ENCODE measurements at regions of chr11 and their contacts with region 1.

Region 1: DNA sequence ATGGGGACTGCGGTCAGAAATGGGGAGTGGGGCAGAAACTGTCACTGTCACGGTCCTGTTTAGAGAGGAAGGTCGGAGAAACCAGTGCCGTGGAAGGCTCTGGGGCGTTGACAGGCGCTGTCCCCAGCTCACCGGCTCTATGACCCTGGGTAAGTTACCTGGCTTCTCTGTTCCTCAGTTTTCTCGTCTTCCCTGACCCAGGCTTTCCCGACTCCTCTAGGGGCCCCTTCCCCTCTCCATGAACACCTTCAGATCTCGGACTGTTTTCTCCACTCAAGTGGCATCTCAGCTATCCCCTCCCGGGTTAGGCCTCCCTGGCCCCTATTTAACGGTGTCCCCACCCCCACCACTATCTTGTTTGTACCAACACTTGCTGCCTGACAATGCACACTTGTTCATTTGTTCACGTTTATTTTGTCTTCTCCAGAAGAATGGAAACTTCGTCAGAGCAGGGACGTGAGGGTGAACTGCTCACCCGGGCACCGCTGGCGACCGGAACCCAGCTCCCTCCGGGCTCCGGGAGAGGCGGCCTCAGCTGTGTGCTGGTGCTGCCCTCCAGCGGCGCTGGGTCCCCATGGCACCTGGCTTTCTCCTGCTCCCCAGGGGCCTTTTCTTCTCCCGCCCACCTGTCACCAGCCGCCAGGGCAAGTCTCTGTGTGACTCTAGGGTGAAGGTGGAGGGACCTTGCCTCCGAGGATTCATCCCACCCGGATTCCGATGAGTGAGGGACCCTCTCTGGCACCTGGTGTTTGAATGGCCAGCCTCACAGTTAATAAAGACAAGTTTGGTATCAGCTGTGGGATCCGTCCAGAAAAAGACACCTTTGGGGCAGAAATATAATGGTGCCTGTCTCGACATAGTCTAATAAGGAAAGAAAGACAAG is 33.1 kb upstream of the SLC35C1 start:
- DNase-seq: peak; percentile 62
- H3K4me3 ChIP-seq: peak overlapping the region; percentile 27 to 45 (median 42)
- H3K27ac ChIP-seq: no peak overlapping the region
- H3K4me1 ChIP-seq: peaks cover 8% of the 10 kb centered on the region
- H3K27me3 ChIP-seq: no peaks in the 10 kb centered on the region
- CTCF ChIP-seq: peak; percentile 79 to 98

Region 2: DNA sequence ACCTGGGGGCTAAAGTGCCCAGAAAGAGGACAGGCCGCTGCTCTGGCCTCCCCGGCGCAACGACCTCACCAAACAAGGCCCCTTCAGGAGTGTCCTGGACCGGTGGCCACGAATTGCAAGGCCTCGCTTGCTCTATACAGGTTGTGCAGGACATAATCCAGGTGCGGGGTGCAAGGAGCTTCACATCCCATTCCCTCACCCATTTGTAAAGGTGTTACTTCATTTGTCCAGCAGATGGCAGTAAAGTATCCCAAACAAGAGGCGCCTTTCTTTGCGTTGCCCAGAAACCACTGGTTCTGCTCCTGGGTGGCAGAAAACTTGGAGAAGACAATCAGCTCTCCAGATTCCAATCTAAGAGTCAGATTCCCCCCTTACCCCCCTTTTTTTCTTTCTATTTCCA is 661.2 kb before region 1 on chr11:
- CTCF ChIA-PET with region 1: no interaction called
- dilution Hi-C with region 1: no loop called
- in situ Hi-C with region 1: no loop called
- intact Hi-C with region 1: loop called (anchors 2 kb)
- DNase-seq: peak; percentile 49
- H3K4me3 ChIP-seq: no peak overlapping the region
- H3K27ac ChIP-seq: no peak overlapping the region
- H3K4me1 ChIP-seq: peaks cover 6% of the 10 kb centered on the region
- H3K27me3 ChIP-seq: no peaks in the 10 kb centered on the region
- CTCF ChIP-seq: peak; percentile 44 to 73

Region 3: DNA sequence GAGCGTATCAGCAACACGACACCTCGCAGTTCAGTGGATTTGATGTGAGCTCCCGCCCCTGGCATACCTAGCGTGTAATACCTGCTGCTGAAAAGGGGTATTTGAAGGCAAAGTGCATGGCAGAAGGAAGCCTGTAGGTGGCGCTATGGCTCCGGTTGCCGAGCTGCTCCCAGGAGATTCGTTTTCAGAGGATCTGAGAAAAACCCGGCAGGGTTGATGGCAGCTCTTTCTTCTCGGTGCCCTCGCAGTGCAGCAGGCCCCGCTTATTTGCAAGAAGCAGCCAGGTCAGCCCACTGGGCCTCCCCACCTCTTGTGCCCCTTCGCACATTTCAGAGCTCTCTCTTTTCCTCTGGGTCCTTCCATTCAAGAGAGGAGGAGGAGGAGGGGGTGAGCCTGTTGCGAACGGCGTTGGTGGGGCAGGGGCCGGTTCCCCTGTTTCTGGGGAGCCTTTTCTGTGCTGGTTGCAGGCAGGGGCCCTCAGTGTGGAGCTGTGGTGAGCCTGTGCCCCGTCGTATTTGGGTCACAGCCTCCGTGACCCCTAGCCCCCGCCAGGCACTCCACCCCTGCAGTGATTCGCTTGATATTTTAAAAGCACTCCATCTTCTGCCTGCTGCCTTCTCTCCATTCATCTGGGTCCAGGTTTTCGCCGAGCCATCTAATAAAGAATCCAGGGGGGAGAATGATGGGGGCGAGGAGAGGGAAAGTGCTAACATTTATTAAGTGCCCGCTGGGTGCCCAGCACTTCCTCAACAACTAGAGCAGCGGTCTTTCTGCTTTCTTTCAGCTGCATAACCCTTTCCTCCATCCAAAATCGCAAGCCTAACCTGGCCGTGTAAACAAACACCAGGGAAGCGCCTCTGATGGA is 400.3 kb before region 1 on chr11:
- CTCF ChIA-PET with region 1: interaction called, 28 read pairs
- dilution Hi-C with region 1: no loop called
- in situ Hi-C with region 1: loop called (anchors 5 to 10 kb)
- intact Hi-C with region 1: loop called (anchors 1 kb)
- DNase-seq: peak; percentile 38
- H3K4me3 ChIP-seq: no peak overlapping the region
- H3K27ac ChIP-seq: no peak overlapping the region
- H3K4me1 ChIP-seq: no peaks in the 10 kb centered on the region
- H3K27me3 ChIP-seq: peaks cover under 1% of the 10 kb centered on the region
- CTCF ChIP-seq: peak; percentile 94 to 99

Region 4: DNA sequence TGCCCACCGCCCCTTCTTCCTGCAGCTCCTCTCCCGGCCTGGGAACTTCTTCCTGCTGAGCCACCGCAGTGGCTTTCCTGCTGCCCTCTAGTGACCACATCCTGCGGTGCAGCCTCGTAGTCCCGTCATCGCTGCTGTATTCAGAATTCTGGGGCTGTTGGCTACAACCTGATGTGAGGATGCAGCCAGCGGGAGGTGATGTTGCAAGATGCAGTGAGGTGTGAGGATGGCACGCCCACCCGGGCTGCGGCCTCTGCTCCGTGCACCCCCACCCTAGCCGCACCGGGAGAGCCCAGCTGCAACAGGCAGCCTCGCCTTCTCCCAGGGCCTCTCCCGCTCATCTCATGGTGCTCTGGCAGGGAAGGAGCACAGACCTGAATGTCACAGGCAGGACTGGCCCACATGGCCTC is 116.5 kb before region 1 on chr11:
- CTCF ChIA-PET with region 1: interaction called, 5 read pairs
- dilution Hi-C with region 1: no loop called
- in situ Hi-C with region 1: no loop called
- intact Hi-C with region 1: loop called (anchors 2 kb)
- DNase-seq: peak; percentile 36
- H3K4me3 ChIP-seq: no peak overlapping the region
- H3K27ac ChIP-seq: no peak overlapping the region
- H3K4me1 ChIP-seq: peaks cover 7% of the 10 kb centered on the region
- H3K27me3 ChIP-seq: no peaks in the 10 kb centered on the region
- CTCF ChIP-seq: peak; percentile 92 to 93

Region 5: DNA sequence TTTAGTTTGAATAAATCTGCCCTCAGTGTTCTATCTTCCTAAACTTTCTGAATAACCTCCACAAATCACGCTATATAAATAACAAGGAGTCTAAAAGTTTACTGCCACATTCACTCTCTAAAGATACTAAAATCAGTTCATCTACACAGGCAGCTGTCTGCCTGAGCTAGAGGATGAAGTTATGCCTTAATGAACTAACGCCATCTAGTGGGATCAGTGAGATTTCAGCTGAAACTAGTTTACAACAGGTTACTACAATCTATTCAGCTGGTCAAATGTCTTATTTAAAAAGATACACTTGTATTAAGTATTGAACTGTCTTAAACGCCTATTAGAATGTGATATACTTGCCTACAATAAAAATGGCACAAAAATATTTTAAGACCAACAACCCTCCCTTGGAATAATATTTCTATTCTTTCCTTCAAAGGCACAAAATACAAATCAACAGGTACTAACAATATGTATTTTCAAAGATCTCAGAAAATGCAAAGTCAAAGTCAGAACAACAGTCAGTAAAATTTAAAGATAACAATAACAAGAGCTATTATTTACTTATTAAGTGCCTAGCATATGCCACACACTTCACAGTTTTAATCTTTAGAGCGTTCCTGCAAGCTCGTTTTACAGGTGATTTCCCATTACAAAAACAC is 234.7 kb after region 1 on chr11:
- CTCF ChIA-PET with region 1: no interaction called
- dilution Hi-C with region 1: no loop called
- in situ Hi-C with region 1: no loop called
- intact Hi-C with region 1: loop called (anchors 2 kb)
- DNase-seq: peak; percentile 57
- H3K4me3 ChIP-seq: no peak overlapping the region
- H3K27ac ChIP-seq: no peak overlapping the region
- H3K4me1 ChIP-seq: no peaks in the 10 kb centered on the region
- H3K27me3 ChIP-seq: no peaks in the 10 kb centered on the region
- CTCF ChIP-seq: peak; percentile 72 to 80

Measured in mammary epithelial cell (primary cell).